Uterus (tissue), 4 donors: ENCODE measurements at regions of chr19 and their contacts with region 1.

Region 1: DNA sequence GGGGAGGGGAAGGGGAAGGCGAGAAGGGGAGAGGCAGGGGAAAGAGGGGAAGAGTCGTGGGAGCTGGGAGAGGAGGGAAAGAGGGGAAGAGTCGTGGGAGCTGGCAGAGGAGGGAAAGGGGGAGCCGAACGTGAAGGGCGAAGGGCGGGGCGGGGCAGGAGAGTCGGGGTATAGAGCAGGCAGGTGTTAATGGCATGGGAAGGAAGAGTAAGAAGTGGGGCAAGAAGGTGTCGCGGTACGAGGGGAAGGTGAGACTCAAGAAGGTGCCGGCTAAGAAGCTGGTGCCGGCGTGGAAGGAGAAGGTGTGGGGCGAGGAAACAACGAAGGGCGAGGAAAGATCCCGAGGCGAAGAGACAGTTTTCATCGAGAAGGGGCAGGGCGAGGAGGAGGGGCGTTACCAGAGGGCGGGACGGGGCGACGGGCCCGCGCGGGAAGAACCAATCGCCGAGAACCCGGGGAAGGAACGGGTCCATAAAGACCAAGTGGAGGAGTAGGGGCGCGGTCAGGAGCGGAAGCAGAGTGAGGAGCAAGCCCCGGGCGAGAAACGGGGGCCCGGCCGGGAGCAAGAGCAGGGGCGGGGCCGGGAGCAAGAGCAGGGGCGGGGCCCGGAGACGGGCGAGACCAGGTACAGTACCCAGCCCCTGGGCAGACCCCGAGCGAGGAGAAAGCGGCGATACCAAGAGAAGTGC is 463 bp downstream of the CATSPERG start:
- DNase-seq: peak; percentile 95 to 96
- H3K4me3 ChIP-seq: peak overlapping the region; percentile 62 to 69
- H3K27ac ChIP-seq: peak overlapping the region; percentile 95 to 96
- H3K4me1 ChIP-seq: peaks cover 0 to 6% of the 10 kb centered on the region in 2 donors
- H3K27me3 ChIP-seq: no peaks in the 10 kb centered on the region
- CTCF ChIP-seq: no peak
- POLR2A ChIP-seq: peak; percentile 32 to 50

Region 2: GRCh38 chr19:37914908-37915307 is 421.2 kb before region 1 on chr19:
- intact Hi-C with region 1: no loop called
- DNase-seq: no peak
- H3K4me3 ChIP-seq: no peak overlapping the region
- H3K27ac ChIP-seq: no peak overlapping the region
- H3K4me1 ChIP-seq: no peaks in the 10 kb centered on the region
- H3K27me3 ChIP-seq: no peaks in the 10 kb centered on the region
- CTCF ChIP-seq: no peak
- POLR2A ChIP-seq: no peak

Region 3: GRCh38 chr19:38239816-38240215 is 96.3 kb before region 1 on chr19:
- intact Hi-C with region 1: loop called (anchors 5 kb)
- DNase-seq: no peak
- H3K4me3 ChIP-seq: no peak overlapping the region
- H3K27ac ChIP-seq: no peak overlapping the region
- H3K4me1 ChIP-seq: no peaks in the 10 kb centered on the region
- H3K27me3 ChIP-seq: no peaks in the 10 kb centered on the region
- CTCF ChIP-seq: no peak
- POLR2A ChIP-seq: no peak

Region 4: GRCh38 chr19:38374429-38375176 is 38.5 kb after region 1 on chr19 and contains the start of gene PSMD8:
- intact Hi-C with region 1: loop called (anchors 5 kb)
- DNase-seq: peak; percentile 98 to 99
- H3K4me3 ChIP-seq: peak within 1 kb of the TSS; percentile 85 to 93
- H3K27ac ChIP-seq: peak within 1 kb of the TSS; percentile 90
- H3K4me1 ChIP-seq: peaks cover 3 to 15% of the 10 kb centered on the region in 2 donors
- H3K27me3 ChIP-seq: no peaks in the 10 kb centered on the region
- CTCF ChIP-seq: peak in 1 of 4 experiments; percentile 18
- POLR2A ChIP-seq: peak; percentile 90 to 91
- total RNA-seq, gene PSMD8: 67.4 to 156 (median 128) TPM